Naive thymus-derived CD4-positive, alpha-beta T cell (primary cell): ENCODE measurements at regions of chr13 and their contacts with region 1.

Region 1: GRCh38 chr13:99314640-99315176 is 7.5 kb upstream of the GPR183 start:
- DNase-seq: peak in 8 of 9 donors; percentile 57 to 89 (median 87)
- ATAC-seq: peak; percentile 80
- H3K4me3 ChIP-seq: peak overlapping the region; percentile 47
- H3K4me3 Mint-ChIP-seq: peak overlapping the region; percentile 46 to 91 (median 78)
- H3K27ac ChIP-seq: peak overlapping the region; percentile 90
- H3K27ac Mint-ChIP-seq: peak overlapping the region; percentile 87 to 99 (median 93)
- H3K4me1 ChIP-seq: peaks cover 56 to 72% of the 10 kb centered on the region in 2 donors
- H3K4me1 Mint-ChIP-seq: peaks cover 58 to 96% (median 78%) of the 10 kb centered on the region in 7 donors
- H3K27me3 ChIP-seq: no peaks in the 10 kb centered on the region
- H3K27me3 Mint-ChIP-seq: no peaks in the 10 kb centered on the region

Region 2: GRCh38 chr13:99288089-99288488 is 26.6 kb before region 1 on chr13:
- CTCF ChIA-PET with region 1: no interaction called
- POLR2A ChIA-PET with region 1: interaction called, 7 read pairs
- intact Hi-C with region 1: loop called in 1 of 2 experiments (anchors 2 kb)
- DNase-seq: no peak
- ATAC-seq: no peak
- H3K4me3 ChIP-seq: no peak overlapping the region
- H3K4me3 Mint-ChIP-seq: peak overlapping the region in 8 of 10 donors; percentile 3 to 76 (median 54)
- H3K27ac ChIP-seq: peak overlapping the region; percentile 32
- H3K27ac Mint-ChIP-seq: peak overlapping the region; percentile 60 to 96 (median 89)
- H3K4me1 ChIP-seq: peaks cover 69 to 79% of the 10 kb centered on the region in 2 donors
- H3K4me1 Mint-ChIP-seq: peaks cover 64 to 97% (median 93%) of the 10 kb centered on the region in 7 donors
- H3K27me3 ChIP-seq: no peaks in the 10 kb centered on the region
- H3K27me3 Mint-ChIP-seq: no peaks in the 10 kb centered on the region

Region 3: DNA sequence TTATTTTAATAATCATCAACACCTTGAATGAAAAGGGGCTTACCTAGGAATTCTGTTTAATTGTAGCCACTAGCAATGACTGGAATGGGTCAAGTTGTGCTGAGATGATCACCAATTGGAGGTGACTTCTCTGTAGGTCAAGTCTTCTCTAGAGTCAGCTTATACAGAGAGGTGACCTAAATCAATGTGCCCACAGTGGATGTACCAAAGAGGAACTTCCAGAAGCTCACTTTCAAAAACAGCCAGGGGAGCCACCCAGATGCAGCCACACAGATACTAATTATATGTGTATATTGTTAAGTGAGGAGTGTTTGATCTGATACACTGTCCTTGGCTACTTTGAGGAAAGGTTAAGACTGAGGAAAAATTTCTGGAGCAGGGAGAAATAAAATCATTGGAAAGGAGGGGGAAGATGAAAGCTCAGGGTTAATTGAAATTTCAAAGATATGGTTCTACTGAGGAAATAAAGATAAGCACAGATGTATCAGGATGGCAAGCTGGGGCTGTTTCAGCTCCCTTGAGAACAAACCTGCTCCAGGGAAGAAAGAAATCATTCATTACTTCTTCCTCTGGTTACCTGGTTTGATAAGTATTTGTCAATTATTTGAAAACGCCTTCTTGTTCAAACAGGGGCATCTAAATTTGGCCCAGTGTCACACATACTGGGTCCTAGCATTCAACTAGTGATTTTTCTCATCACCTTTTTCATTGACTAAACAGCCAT is 12.6 kb before region 1 on chr13:
- CTCF ChIA-PET with region 1: interaction called, 4 read pairs
- POLR2A ChIA-PET with region 1: interaction called, 36 read pairs
- intact Hi-C with region 1: loop called (anchors 1 kb)
- DNase-seq: no peak
- ATAC-seq: no peak
- H3K4me3 ChIP-seq: peak overlapping the region; percentile 89
- H3K4me3 Mint-ChIP-seq: peak overlapping the region; percentile 89 to 100 (median 94)
- H3K27ac ChIP-seq: peak overlapping the region; percentile 88
- H3K27ac Mint-ChIP-seq: peak overlapping the region; percentile 61 to 99 (median 93)
- H3K4me1 ChIP-seq: peaks cover 54 to 60% of the 10 kb centered on the region in 2 donors
- H3K4me1 Mint-ChIP-seq: peaks cover 58 to 80% (median 71%) of the 10 kb centered on the region in 7 donors
- H3K27me3 ChIP-seq: no peaks in the 10 kb centered on the region
- H3K27me3 Mint-ChIP-seq: no peaks in the 10 kb centered on the region

Region 4: DNA sequence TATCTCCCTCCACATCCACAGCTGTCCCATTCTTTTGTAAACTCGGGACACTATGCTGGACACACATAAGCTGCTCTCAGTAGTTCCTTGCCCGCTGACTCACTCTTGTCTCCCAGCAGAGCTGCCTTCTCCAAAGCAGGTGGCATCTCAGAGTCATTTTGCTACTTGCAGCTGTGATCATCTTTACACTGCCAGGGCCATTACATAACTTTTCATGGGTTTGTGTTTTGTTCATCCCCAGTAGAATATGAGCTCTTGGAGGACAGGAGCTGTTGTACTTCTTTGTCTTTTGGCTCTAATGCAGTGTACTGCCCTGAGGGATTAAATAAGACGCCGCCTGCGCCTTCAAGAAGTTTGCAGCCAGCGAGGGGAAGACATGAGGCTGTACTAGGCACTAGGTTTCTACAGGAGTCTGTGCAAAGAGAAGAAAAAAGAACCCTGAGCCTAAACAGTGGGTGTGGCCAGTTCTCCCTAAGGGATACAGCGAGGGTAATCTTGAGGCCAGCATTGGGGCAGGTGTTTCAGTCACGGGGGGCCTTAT is 33.3 kb after region 1 on chr13:
- CTCF ChIA-PET with region 1: interaction called, 3 read pairs
- POLR2A ChIA-PET with region 1: interaction called, 205 read pairs
- intact Hi-C with region 1: no loop called
- DNase-seq: no peak
- ATAC-seq: no peak
- H3K4me3 ChIP-seq: no peak overlapping the region
- H3K4me3 Mint-ChIP-seq: peak overlapping the region in 2 of 10 donors; percentile 17 to 48
- H3K27ac ChIP-seq: peak overlapping the region; percentile 41
- H3K27ac Mint-ChIP-seq: peak overlapping the region; percentile 30 to 99 (median 96)
- H3K4me1 ChIP-seq: peaks cover 30 to 36% of the 10 kb centered on the region in 2 donors
- H3K4me1 Mint-ChIP-seq: peaks cover 42 to 98% (median 89%) of the 10 kb centered on the region in 7 donors
- H3K27me3 ChIP-seq: no peaks in the 10 kb centered on the region
- H3K27me3 Mint-ChIP-seq: no peaks in the 10 kb centered on the region

Region 5: DNA sequence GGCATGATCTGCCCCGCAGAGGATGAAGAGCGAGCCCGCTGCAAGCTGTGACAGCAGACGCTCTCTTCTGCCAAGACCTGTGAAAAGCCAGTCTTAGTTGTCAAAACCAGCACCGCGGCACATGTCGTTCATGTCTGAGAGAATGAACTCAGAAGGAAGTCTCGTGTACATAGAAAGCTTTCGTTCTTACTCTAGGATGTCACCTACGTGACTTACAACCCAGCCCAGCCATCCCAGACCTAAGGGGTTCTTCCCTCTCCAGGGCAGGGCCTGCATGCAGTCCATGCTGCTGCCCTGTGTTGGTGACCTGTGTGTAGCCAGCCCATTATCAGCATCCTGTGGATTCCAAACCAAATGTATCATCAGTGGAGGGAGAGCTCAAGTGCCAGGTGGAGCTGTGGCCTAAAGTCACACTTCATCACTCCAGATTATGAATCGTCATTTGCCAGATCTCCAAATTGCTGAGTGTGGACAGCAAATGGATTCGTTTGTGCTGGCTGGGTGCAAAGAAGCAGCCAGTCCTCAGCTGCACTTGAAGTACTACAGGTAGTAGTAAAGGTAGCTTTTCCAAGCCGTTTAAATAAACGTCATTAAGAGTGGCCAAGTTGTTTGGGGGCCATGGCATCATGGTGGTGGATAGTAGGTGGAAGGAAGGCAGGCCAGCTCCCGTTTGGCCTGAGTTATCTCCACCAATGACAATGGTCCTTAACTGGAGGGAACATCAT is 66.4 kb after region 1 on chr13:
- CTCF ChIA-PET with region 1: interaction called, 7 read pairs
- POLR2A ChIA-PET with region 1: interaction called, 364 read pairs
- intact Hi-C with region 1: loop called in 1 of 2 experiments (anchors 5 kb)
- DNase-seq: peak in 8 of 9 donors; percentile 55 to 73 (median 62)
- ATAC-seq: peak; percentile 51
- H3K4me3 ChIP-seq: peak overlapping the region; percentile 1
- H3K4me3 Mint-ChIP-seq: peak overlapping the region; percentile 63 to 85 (median 76)
- H3K27ac ChIP-seq: peak overlapping the region; percentile 85
- H3K27ac Mint-ChIP-seq: peak overlapping the region; percentile 94 to 99 (median 98)
- H3K4me1 ChIP-seq: peaks cover 77 to 88% of the 10 kb centered on the region in 2 donors
- H3K4me1 Mint-ChIP-seq: peaks cover 48 to 100% (median 98%) of the 10 kb centered on the region in 7 donors
- H3K27me3 ChIP-seq: no peaks in the 10 kb centered on the region
- H3K27me3 Mint-ChIP-seq: no peaks in the 10 kb centered on the region